Aorta (tissue), 5 donors: ENCODE measurements at regions of chr19 and their contacts with region 1.

Region 1: GRCh38 chr19:51986309-51987291 is at the start of gene ZNF350:
- DNase-seq: peak; percentile 94 to 95
- ATAC-seq: peak; percentile 98
- H3K4me3 ChIP-seq: peak within 1 kb of the TSS; percentile 99
- H3K27ac ChIP-seq: peak within 1 kb of the TSS in 1 of 2 donors; percentile 65
- H3K4me1 ChIP-seq: no peaks in the 10 kb centered on the region
- H3K27me3 ChIP-seq: no peaks in the 10 kb centered on the region
- total RNA-seq, gene ZNF350: 13.2 to 17.7 TPM

Region 2: GRCh38 chr19:51891193-51891747 is 95.3 kb before region 1 on chr19:
- intact Hi-C with region 1: loop called in 1 of 2 experiments (anchors 10 kb)
- DNase-seq: no peak
- ATAC-seq: no peak
- H3K4me3 ChIP-seq: no peak overlapping the region
- H3K27ac ChIP-seq: no peak overlapping the region
- H3K4me1 ChIP-seq: peaks cover 0 to 1% of the 10 kb centered on the region in 2 donors
- H3K27me3 ChIP-seq: no peaks in the 10 kb centered on the region

Region 3: DNA sequence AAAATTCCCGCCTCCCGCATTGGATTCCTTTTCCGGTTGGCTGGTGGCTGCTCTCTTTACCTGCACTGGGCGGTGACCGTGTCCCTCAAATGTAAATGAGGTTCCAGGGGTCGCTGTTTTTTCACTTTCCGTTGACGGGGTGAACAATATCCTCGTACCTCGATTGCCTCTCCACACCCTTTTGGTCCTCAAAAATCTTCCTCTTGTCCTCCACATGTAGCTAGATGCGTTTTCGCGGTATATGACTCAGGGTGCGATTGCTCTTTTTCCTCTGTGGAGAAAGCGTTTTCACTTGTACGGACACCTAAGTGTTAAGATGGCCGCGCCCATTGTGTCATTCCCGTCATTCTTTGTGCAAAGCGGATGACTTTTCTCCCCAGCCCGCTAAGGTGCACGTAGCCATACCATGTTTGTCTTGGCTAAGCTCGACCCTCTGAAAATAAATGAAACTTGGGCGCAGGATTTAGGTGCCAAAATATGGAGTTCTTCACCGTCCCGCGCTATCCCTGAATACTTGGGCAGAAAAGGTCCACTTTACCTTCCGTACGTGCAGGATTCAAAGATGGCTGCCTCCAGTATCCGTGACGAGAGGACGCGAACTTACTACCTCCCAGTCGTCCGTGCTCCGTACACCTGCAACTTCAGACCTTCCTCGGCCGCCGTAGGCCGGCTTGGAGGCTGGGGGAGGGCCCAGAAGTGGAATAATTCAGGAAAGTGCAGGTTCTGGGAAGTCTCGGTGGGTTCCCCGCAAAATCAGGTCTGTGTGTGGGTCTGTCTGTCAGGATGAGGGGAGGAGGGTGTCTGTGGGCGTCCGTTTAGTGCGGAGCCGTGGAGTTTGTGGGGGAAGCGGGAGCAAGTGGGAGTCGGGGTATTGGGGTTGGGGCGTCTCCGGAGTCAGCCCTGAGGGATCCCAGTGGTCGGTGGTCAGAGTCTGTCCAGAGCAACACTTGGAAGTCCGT is 59.5 kb before region 1 on chr19 and contains the start of gene ZNF613:
- intact Hi-C with region 1: loop called in 1 of 2 experiments (anchors 10 kb)
- DNase-seq: peak; percentile 92 to 96
- ATAC-seq: peak; percentile 98
- H3K4me3 ChIP-seq: peak within 1 kb of the TSS; percentile 88
- H3K27ac ChIP-seq: peak within 1 kb of the TSS in 1 of 2 donors; percentile 87
- H3K4me1 ChIP-seq: no peaks in the 10 kb centered on the region
- H3K27me3 ChIP-seq: no peaks in the 10 kb centered on the region
- total RNA-seq, gene ZNF613: 6.4 to 8.8 TPM

Region 4: GRCh38 chr19:51948975-51949374 is 37.6 kb before region 1 on chr19:
- intact Hi-C with region 1: no loop called
- DNase-seq: peak; percentile 58 to 80
- ATAC-seq: peak; percentile 72
- H3K4me3 ChIP-seq: no peak overlapping the region
- H3K27ac ChIP-seq: no peak overlapping the region
- H3K4me1 ChIP-seq: no peaks in the 10 kb centered on the region
- H3K27me3 ChIP-seq: no peaks in the 10 kb centered on the region

Region 5: DNA sequence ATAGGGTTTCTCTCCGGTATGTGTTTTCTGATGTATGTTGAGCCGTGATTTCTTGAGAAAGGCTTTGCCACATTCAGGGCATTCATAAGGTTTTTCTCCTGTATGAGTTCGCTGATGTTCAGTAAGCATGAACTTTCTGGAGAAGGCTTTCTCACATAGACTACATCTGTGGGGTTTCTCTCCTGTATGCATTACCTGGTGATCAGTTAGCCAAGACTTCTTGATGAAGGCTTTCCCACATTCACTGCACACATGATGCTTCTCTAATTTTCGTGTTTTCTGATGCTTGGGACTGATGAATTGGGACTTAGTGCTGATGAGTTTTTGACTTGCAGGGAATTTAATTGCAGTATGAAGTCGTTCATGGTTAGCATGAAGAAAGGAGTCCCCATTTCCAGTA is 21.0 kb before region 1 on chr19:
- intact Hi-C with region 1: no loop called
- DNase-seq: no peak
- ATAC-seq: no peak
- H3K4me3 ChIP-seq: peak overlapping the region in 1 of 2 donors; percentile 10
- H3K27ac ChIP-seq: no peak overlapping the region
- H3K4me1 ChIP-seq: no peaks in the 10 kb centered on the region
- H3K27me3 ChIP-seq: no peaks in the 10 kb centered on the region

Region 6: GRCh38 chr19:52028027-52028779 is 41.6 kb after region 1 on chr19 and contains the start of gene ZNF614:
- intact Hi-C with region 1: loop called in 1 of 2 experiments (anchors 5 kb)
- DNase-seq: peak; percentile 92 to 96
- ATAC-seq: peak; percentile 97
- H3K4me3 ChIP-seq: peak within 1 kb of the TSS; percentile 20 to 79
- H3K27ac ChIP-seq: peak within 1 kb of the TSS; percentile 38 to 57
- H3K4me1 ChIP-seq: peaks cover 0 to 5% of the 10 kb centered on the region in 2 donors
- H3K27me3 ChIP-seq: no peaks in the 10 kb centered on the region
- total RNA-seq, gene ZNF614: 8.1 to 9.3 TPM

Region 7: DNA sequence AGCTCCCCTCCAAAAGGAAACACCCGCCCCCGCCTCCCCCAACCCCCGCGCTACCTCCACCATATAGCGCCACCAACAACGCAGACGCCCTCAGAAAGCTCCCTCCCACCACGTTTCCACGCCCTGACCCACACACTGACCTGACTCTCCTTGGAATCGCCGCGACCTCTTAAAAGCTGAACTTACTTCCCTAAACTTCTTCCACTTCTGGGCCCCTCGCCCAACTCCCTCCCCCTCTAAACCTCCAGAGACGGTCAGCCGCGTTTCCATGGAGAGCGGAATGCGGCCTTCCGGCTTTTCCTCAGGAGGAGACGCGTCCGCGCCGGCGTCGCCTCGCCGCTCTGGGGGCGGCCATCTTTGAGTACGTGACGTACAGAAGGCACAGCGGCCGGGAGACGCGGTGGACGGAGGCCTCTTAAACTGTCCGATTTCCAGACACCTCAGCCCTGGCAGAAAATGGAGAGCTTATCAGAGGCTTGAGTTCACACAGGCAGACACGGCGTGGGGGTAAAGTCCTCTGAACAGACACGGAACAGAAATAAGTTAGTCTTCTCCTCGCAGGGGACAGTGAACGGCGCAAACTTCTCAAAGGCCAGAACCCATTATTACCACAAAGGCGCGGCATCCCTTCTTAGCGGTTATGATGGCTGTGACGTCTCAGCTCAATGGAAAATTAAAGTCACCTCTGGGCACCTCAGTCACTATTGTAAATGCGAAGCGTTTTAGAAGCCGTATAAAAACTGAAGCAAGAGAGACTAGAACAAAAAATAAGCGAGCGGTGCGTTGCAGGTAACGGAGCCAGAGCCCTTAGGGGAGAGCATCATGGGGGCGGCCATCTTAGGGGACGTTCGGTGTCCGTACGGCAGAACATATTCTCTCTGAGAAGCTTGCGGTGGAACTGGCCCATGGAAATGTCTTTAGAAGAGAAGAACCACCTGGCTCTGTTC is 62.2 kb after region 1 on chr19 and contains the start of gene ZNF432:
- intact Hi-C with region 1: no loop called
- DNase-seq: peak; percentile 98
- ATAC-seq: peak; percentile 99
- H3K4me3 ChIP-seq: peak within 1 kb of the TSS; percentile 74 to 86
- H3K27ac ChIP-seq: peak within 1 kb of the TSS; percentile 8 to 93
- H3K4me1 ChIP-seq: no peaks in the 10 kb centered on the region
- H3K27me3 ChIP-seq: no peaks in the 10 kb centered on the region
- total RNA-seq, gene ZNF432: 21.4 to 22.0 TPM